ENCODE measurements at regions of chr3 and their contacts with region 1.

Region 1: GRCh38 chr3:136893848-136894443 is 31.9 kb downstream of the NCK1 start:
- DNase-seq: no peak
- ATAC-seq: no peak
- H3K4me3 ChIP-seq: no peak overlapping the region
- H3K4me3 Mint-ChIP-seq: peak overlapping the region in 1 of 3 donors; percentile 31
- H3K27ac ChIP-seq: no peak overlapping the region
- H3K27ac Mint-ChIP-seq: no peak overlapping the region
- H3K4me1 ChIP-seq: peaks cover 7 to 17% of the 10 kb centered on the region in 2 experiments
- H3K4me1 Mint-ChIP-seq: peaks cover 71 to 75% (median 74%) of the 10 kb centered on the region in 3 donors
- H3K27me3 ChIP-seq: no peaks in the 10 kb centered on the region
- H3K27me3 Mint-ChIP-seq: no peaks in the 10 kb centered on the region

Region 2: DNA sequence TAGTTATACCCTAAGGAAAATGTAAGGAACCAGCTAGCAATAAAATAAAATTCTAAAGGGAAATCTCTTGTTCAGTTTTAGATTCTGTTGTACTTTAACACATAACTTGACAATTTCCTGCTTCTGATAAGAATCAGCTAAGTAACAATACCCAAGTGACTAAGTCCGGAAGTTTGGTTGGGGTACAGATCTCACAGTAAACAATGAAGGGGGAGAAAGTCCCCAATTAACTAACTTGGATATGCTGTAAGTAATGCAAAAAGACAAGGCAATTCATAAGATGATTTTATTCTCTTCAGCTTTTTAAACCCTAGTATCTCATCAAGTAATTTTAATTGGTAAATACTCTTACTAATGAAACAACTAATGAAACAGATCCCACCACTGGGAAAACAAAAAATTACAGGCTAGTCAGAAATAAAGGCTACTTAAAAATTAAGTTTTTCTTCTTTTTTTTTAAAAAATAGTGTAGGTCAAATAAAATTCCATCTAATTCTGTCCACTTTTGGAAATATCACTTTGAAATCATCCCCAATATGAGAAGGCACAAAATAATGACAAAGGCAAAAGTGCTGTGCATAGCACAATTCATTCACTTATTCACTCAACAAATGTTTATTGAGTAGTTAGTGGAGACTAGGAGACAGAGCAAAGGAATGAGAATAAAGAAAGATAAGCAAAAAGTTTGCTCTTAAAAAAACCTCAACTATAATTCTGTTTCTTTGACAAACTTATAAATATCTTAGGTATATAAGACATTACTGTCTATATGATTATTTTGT is 26.0 kb after region 1 on chr3:
- CTCF ChIA-PET with region 1: interaction called in 1 of 2 experiments, 3 read pairs
- POLR2A ChIA-PET with region 1: interaction called in 1 of 2 experiments, 12 read pairs
- DNase-seq: peak in 14 of 35 experiments; percentile 4 to 81 (median 18)
- ATAC-seq: peak; percentile 85 to 97 (median 94)
- H3K4me3 ChIP-seq: no peak overlapping the region
- H3K4me3 Mint-ChIP-seq: peak overlapping the region; percentile 41 to 46 (median 46)
- H3K27ac ChIP-seq: peak overlapping the region; percentile 86
- H3K27ac Mint-ChIP-seq: peak overlapping the region; percentile 72 to 97
- H3K4me1 ChIP-seq: peaks cover 22 to 33% of the 10 kb centered on the region in 2 experiments
- H3K4me1 Mint-ChIP-seq: peaks cover 88 to 92% (median 89%) of the 10 kb centered on the region in 3 donors
- H3K27me3 ChIP-seq: no peaks in the 10 kb centered on the region
- H3K27me3 Mint-ChIP-seq: no peaks in the 10 kb centered on the region

Region 3: GRCh38 chr3:137032465-137033120 is 138.6 kb after region 1 on chr3:
- CTCF ChIA-PET with region 1: interaction called in 1 of 2 experiments, 11 read pairs
- POLR2A ChIA-PET with region 1: no interaction called
- DNase-seq: peak; percentile 31 to 83 (median 65)
- ATAC-seq: peak; percentile 72 to 84 (median 76)
- H3K4me3 ChIP-seq: peak overlapping the region in 1 of 2 donors; percentile 55
- H3K4me3 Mint-ChIP-seq: peak overlapping the region; percentile 53 to 67 (median 66)
- H3K27ac ChIP-seq: no peak overlapping the region
- H3K27ac Mint-ChIP-seq: no peak overlapping the region
- H3K4me1 ChIP-seq: peaks cover 0 to 7% of the 10 kb centered on the region in 2 experiments
- H3K4me1 Mint-ChIP-seq: peaks cover 7 to 10% (median 9%) of the 10 kb centered on the region in 3 donors
- H3K27me3 ChIP-seq: peaks cover 2 to 39% of the 10 kb centered on the region in 2 experiments
- H3K27me3 Mint-ChIP-seq: peaks cover 28 to 41% of the 10 kb centered on the region in 2 donors